ENCODE measurements at regions of chr7 and their contacts with region 1.

Region 1: DNA sequence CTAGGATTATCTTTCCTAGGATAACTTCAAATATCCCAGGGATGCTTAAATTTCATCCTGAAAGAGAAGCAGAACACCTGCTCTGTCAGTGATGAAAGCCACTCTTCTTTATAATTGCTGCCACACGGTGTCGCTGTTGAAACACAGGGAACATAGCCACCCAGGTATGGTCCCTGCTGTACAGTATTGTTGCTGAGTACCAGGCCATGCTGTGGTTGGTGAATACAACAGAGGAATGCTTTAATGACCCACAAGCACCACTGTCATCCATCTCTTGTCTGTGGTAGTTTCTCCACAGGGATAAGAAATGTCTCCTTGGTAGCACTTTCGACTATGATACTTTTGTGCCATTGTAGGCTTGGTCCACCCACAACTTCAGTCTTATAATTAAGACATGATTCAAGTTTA is 70.6 kb upstream of the STARD3NL start:
- DNase-seq: peak; percentile 52
- H3K4me3 ChIP-seq: no peak overlapping the region
- H3K27ac ChIP-seq: no peak overlapping the region
- H3K4me1 ChIP-seq: no peaks in the 10 kb centered on the region
- H3K27me3 ChIP-seq: no peaks in the 10 kb centered on the region
- CTCF ChIP-seq: peak; percentile 79 to 84

Region 2: GRCh38 chr7:37901236-37901827 is 206.2 kb before region 1 on chr7:
- CTCF ChIA-PET with region 1: no interaction called
- dilution Hi-C with region 1: no loop called
- in situ Hi-C with region 1: no loop called
- intact Hi-C with region 1: loop called (anchors 5 kb)
- DNase-seq: peak; percentile 6
- H3K4me3 ChIP-seq: no peak overlapping the region
- H3K27ac ChIP-seq: no peak overlapping the region
- H3K4me1 ChIP-seq: peaks cover 6% of the 10 kb centered on the region
- H3K27me3 ChIP-seq: peaks cover 2% of the 10 kb centered on the region
- CTCF ChIP-seq: peak; percentile 55 to 58

Region 3: DNA sequence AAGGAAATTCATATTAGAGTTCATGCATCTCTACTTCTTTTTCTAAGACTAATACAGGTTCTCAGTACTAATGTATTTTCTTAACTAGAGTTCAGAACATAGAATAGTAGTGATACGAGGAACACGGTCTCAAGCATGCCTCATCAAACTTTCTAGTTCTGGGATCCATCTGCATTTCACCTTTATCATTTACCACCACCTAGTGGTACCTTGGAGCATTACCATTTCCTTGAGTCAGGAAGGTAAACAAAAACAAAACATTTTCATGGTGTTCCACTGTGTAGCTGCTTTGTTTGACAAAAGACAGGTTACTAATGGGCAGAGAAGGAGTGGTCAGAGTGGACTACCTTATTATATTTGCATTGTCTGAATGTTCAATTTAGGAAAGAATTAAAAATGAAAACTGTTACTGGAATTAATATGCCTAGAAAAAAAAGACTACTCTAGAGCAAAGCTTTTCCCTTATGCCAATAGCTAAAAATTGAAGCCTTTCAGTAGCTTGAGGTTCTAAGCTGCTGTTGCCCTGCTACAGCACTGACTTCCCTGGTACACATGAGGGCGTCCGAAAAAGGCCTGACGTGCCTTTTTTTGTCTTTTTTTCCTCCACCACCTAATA is 115.1 kb after region 1 on chr7:
- CTCF ChIA-PET with region 1: no interaction called
- dilution Hi-C with region 1: loop called (anchors 5 kb)
- in situ Hi-C with region 1: loop called (anchors 5 kb)
- intact Hi-C with region 1: loop called (anchors 1 kb)
- DNase-seq: peak; percentile 50
- H3K4me3 ChIP-seq: no peak overlapping the region
- H3K27ac ChIP-seq: no peak overlapping the region
- H3K4me1 ChIP-seq: no peaks in the 10 kb centered on the region
- H3K27me3 ChIP-seq: no peaks in the 10 kb centered on the region
- CTCF ChIP-seq: peak; percentile 87 to 89

Region 4: GRCh38 chr7:38229386-38229785 is 121.9 kb after region 1 on chr7:
- CTCF ChIA-PET with region 1: no interaction called
- dilution Hi-C with region 1: loop called (anchors 5 kb)
- in situ Hi-C with region 1: loop called (anchors 5 kb)
- intact Hi-C with region 1: no loop called
- DNase-seq: no peak
- H3K4me3 ChIP-seq: no peak overlapping the region
- H3K27ac ChIP-seq: no peak overlapping the region
- H3K4me1 ChIP-seq: no peaks in the 10 kb centered on the region
- H3K27me3 ChIP-seq: no peaks in the 10 kb centered on the region
- CTCF ChIP-seq: no peak

Region 5: DNA sequence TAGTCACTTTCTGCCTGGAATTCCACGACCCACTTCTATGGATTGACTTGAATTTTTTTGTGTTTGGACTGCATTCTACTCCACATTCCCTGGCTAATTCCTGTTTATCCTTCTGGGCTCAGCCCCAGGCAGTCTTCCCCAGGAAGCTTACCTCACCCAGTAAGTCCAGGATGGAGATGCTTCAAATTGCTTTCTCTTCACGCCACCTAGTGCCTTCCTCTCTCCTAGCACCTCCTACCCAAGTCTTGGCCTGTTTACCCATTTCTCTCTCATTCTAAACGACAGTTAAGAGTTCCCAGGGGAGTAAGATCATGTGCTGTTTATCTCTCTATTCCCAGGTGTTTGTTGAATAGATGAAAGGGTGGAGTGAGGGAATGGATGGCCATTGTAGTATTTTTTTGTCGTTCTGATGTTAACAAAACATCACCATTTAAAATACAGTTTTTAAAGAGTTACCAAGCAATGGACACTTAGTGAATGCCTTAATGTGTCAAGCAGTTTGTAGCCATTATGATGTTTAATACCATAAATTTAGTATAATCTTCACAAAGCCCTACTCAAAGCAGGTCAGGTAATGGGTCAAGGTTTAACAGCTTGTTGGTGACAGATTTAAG is 211.4 kb after region 1 on chr7:
- CTCF ChIA-PET with region 1: no interaction called
- dilution Hi-C with region 1: no loop called
- in situ Hi-C with region 1: loop called in 1 of 2 experiments (anchors 25 kb)
- intact Hi-C with region 1: loop called (anchors 1 kb)
- DNase-seq: peak; percentile 52
- H3K4me3 ChIP-seq: no peak overlapping the region
- H3K27ac ChIP-seq: no peak overlapping the region
- H3K4me1 ChIP-seq: peaks cover 4% of the 10 kb centered on the region
- H3K27me3 ChIP-seq: peaks cover 2% of the 10 kb centered on the region
- CTCF ChIP-seq: peak; percentile 54 to 71

Region 6: DNA sequence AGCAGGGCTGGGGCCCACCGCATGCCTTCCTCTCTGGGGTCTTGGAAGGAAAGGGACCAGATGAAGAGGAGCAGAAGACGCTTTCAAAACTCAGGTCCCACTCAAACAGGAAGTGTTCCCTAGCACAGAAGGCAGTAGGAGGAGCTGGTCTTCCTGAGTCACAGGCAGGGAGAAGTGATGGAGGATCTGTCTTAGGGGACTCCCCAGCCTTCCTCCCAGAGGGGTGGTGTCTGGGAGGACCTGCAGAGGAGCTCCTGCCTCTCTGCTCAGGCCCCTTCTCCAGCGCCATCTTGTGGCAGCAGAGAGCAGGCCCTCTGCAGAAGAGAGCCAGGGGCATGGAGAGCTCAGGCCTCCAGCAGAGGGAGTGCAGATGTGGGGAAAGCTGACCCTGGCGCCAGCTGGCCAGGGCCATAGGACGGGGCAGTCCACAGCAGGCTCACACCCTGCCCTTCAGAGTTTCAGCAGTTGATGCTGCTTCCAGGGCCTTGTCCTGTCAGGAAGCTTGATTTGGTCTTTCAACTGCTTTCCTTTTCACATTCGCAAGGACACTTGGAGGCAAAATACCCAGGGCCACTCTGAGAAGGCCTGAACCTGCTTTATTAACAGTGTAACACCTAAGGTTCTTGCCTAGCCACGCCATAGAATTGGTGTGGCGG is 228.1 kb after region 1 on chr7:
- CTCF ChIA-PET with region 1: interaction called, 3 read pairs
- dilution Hi-C with region 1: no loop called
- in situ Hi-C with region 1: no loop called
- intact Hi-C with region 1: loop called (anchors 5 kb)
- DNase-seq: peak; percentile 75
- H3K4me3 ChIP-seq: no peak overlapping the region
- H3K27ac ChIP-seq: no peak overlapping the region
- H3K4me1 ChIP-seq: no peaks in the 10 kb centered on the region
- H3K27me3 ChIP-seq: no peaks in the 10 kb centered on the region
- CTCF ChIP-seq: peak; percentile 87 to 92